Breast epithelium (tissue), 4 donors: ENCODE measurements at regions of chr6 and their contacts with region 1.

Region 1: GRCh38 chr6:17847203-17847760 is 140.2 kb downstream of the KIF13A start:
- DNase-seq: no peak
- H3K4me3 ChIP-seq: no peak overlapping the region
- H3K27ac ChIP-seq: no peak overlapping the region
- H3K4me1 ChIP-seq: no peaks in the 10 kb centered on the region
- H3K27me3 ChIP-seq: no peaks in the 10 kb centered on the region
- CTCF ChIP-seq: no peak
- POLR2A ChIP-seq: no peak

Region 2: DNA sequence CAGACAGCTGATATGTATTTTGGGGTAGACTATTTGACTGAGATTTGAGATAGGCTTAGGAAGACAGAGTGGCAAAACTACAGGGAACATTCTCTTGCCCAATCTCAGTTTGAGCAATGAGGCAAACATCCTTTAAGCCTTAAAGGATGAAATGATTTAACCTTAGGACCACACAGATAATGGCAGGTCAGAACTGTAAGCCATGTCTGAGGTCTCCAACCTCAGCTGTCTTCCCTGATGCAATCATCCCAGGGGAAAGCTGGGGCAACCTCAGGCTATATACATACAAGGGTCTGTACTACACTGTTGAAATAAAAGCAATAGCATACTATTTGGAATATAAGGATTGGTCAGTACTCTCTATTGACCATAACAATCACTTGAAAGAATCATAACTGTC is 56.8 kb before region 1 on chr6:
- intact Hi-C with region 1: no loop called
- DNase-seq: no peak
- H3K4me3 ChIP-seq: no peak overlapping the region
- H3K27ac ChIP-seq: no peak overlapping the region
- H3K4me1 ChIP-seq: no peaks in the 10 kb centered on the region
- H3K27me3 ChIP-seq: no peaks in the 10 kb centered on the region
- CTCF ChIP-seq: no peak
- POLR2A ChIP-seq: no peak

Region 3: GRCh38 chr6:17871836-17872235 is 24.6 kb after region 1 on chr6:
- intact Hi-C with region 1: loop called (anchors 2 kb)
- DNase-seq: no peak
- H3K4me3 ChIP-seq: no peak overlapping the region
- H3K27ac ChIP-seq: no peak overlapping the region
- H3K4me1 ChIP-seq: no peaks in the 10 kb centered on the region
- H3K27me3 ChIP-seq: no peaks in the 10 kb centered on the region
- CTCF ChIP-seq: no peak
- POLR2A ChIP-seq: no peak